Breast epithelium (tissue), 4 donors: ENCODE measurements at regions of chr12 and their contacts with region 1.

Region 1: DNA sequence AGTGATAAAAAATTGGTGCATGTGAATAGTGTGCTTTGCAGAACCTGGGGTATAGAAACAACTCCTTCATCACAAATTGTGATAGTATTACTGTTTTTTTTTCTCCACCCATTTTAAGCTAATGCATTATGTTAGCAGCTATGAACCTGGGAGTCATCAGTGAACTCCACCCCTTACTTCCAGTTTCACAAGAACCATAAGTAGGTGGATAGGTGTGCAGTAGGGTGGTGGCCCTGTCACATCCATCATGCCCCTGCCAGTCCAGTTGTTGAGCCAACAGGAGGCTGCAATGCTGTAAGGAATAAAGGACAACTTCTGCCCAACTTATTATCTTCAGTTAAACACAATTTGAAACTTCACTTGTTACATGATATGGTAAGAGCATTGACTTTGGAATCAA is 85.7 kb downstream of the ABCD2 start:
- DNase-seq: no peak
- H3K4me3 ChIP-seq: no peak overlapping the region
- H3K27ac ChIP-seq: no peak overlapping the region
- H3K4me1 ChIP-seq: no peaks in the 10 kb centered on the region
- H3K27me3 ChIP-seq: no peaks in the 10 kb centered on the region
- CTCF ChIP-seq: no peak
- POLR2A ChIP-seq: no peak

Region 2: DNA sequence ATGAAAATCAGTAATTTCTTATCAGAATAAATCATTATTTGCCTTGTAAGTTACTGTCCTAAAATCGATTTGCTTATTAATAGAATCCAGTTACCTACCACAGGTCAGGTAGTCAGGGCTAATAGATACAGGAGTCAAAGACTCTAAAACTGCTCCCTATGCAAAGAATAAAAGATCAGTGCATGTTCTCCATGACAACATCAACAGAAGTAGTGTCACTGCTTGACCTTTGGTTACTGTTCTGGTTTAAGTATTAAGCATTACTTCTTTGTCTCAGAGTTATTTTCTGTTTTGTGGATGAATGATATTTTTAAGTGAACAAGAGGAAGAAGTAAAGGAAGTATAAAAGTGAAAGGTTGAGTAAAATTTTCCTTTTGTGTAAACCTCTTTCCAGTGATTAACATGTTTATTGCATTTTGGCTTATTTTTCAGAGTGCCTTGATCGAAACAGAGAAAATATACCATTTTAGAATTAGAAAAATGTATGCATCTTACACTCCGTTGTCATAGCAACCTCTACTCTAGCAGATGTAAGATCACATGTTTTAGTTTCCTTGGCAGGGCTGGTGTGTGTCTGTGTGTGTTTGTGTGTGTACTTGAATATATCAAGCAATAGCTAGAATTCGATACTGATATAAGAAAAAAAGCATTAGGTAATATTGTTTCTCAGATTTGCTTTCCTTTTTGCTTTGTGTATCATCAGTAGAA is 41.0 kb after region 1 on chr12:
- intact Hi-C with region 1: loop called (anchors 2 kb)
- DNase-seq: no peak
- H3K4me3 ChIP-seq: no peak overlapping the region
- H3K27ac ChIP-seq: no peak overlapping the region
- H3K4me1 ChIP-seq: no peaks in the 10 kb centered on the region
- H3K27me3 ChIP-seq: no peaks in the 10 kb centered on the region
- CTCF ChIP-seq: no peak
- POLR2A ChIP-seq: no peak